ENCODE measurements at regions of chr19 and their contacts with region 1.

Region 1: DNA sequence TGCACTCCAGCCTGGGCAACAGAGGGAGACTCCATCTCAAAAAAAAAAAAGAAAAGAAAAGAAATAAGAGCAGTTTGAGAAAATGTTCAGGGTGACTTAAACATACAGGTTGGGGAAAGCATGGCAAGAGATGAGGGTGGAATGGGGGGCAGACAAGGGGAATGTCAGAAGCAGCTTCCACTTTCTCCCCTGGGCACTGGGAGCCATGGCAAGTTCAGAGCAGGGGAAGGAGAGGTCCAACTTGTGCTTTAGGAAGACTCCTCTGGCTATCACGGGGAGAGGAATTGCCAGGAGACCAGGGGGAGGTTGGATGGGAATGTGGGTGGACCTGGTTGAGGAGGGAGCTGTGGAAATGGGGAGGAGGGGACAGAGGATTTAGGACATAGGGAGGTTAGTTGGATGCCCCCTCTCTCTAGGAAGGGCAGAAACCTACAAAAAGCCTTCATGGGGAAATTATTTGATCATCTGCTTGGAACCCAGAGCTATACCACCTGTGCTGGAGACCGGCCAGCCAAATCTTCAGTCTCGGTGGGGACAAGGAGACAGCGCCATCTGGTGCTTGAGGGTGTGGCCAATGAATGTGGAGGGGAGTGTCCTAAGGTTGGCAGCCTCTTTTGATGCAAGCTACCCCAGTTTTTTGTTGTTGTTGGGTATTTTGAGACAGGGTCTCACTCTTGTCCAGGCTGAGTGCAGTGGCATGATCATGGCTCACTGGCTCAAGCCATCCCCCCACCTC is 7.3 kb upstream of the STRN4 start:
- DNase-seq: peak; percentile 41
- H3K4me3 ChIP-seq: no peak overlapping the region
- H3K27ac ChIP-seq: no peak overlapping the region
- H3K4me1 ChIP-seq: peaks cover 27% of the 10 kb centered on the region
- H3K27me3 ChIP-seq: no peaks in the 10 kb centered on the region
- CTCF ChIP-seq: peak; percentile 47 to 53
- POLR2A ChIP-seq: no peak

Region 2: DNA sequence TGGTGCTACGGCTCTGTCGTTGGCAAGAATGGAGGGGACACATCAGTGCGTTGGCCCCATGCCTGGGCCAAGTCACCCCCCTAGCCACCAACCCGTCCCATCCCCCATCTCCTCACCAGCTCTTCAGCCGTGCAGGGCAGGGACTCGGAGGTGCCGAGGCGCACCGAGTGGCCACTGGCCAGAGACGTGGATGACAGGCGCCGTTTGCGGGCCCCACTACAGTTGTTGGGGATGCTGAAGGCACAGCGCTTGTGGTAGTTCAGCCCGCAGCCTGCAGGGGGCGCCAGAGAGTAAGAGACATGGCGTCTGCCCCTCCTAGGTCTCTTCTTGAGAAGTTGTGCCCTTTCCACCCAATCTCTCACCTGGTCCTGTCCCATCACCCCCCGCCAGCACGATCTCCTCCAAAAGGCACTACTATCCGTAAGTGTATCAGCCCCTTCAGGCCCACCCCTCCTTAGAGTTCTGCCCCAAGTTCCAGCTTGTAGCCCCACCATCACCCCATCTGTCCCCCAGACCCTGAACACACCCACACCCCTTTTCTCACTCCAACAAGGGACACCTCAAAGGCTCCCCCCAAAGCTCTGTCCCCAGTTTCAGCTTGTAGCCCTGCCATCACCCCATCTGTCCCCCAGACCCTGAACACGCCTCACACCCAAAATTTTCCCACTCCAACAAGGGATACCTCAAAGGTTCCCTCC is 49.1 kb before region 1 on chr19:
- CTCF ChIA-PET with region 1: interaction called, 7 read pairs
- POLR2A ChIA-PET with region 1: no interaction called
- dilution Hi-C with region 1: no loop called
- intact Hi-C with region 1: loop called (anchors 1 kb)
- DNase-seq: peak; percentile 64
- H3K4me3 ChIP-seq: no peak overlapping the region
- H3K27ac ChIP-seq: no peak overlapping the region
- H3K4me1 ChIP-seq: no peaks in the 10 kb centered on the region
- H3K27me3 ChIP-seq: no peaks in the 10 kb centered on the region
- CTCF ChIP-seq: peak; percentile 95 to 98
- POLR2A ChIP-seq: peak; percentile 26

Region 3: DNA sequence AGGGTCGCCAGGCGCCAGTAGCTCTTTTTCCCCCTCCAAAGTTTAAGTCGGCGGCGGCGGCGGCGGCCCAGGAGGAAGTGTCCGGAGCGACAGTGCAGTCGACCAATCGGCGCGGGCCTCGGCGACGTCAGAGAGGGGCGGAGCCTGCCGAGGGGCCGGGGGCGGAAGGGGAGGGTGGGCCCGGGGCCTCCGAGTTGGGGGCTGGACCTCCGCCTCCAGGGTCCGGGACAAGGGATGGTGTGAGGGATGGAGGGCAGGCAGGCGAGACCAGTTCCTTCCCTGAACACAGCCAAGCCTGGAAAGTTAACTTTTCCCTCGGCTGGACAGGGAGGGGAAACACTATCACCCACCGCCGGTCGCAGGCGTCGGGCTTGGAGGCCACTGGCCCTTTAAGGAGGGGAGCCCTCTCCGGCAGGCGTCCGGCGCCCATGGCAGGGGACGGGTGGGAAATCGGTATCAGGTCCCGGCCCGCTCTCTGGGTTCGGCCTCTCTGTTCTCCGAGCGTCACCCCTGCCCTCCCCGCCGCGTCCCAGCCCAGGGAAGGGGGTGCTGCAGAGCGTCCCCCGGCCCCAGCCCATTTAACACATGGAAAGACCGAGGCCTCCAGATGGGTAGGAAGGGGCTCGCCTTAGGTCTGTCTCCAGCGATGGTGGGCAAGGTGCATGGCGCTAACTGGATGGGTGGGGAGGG is 36.4 kb before region 1 on chr19 and contains the start of gene PRKD2:
- CTCF ChIA-PET with region 1: interaction called, 6 read pairs
- POLR2A ChIA-PET with region 1: interaction called, 11 read pairs
- dilution Hi-C with region 1: no loop called
- intact Hi-C with region 1: no loop called
- DNase-seq: peak; percentile 84
- H3K4me3 ChIP-seq: peak within 1 kb of the TSS; percentile 76 to 96 (median 85)
- H3K27ac ChIP-seq: peak within 1 kb of the TSS; percentile 57
- H3K4me1 ChIP-seq: peaks cover 38% of the 10 kb centered on the region
- H3K27me3 ChIP-seq: no peaks in the 10 kb centered on the region
- CTCF ChIP-seq: no peak
- POLR2A ChIP-seq: peak; percentile 68
- total RNA-seq, gene PRKD2: 94.9 and 101 TPM in 2 replicates

Region 4: GRCh38 chr19:46766569-46767317 is 13.2 kb after region 1 on chr19:
- CTCF ChIA-PET with region 1: interaction called, 34 read pairs
- POLR2A ChIA-PET with region 1: no interaction called
- dilution Hi-C with region 1: no loop called
- intact Hi-C with region 1: no loop called
- DNase-seq: peak; percentile 27
- H3K4me3 ChIP-seq: no peak overlapping the region
- H3K27ac ChIP-seq: no peak overlapping the region
- H3K4me1 ChIP-seq: no peaks in the 10 kb centered on the region
- H3K27me3 ChIP-seq: no peaks in the 10 kb centered on the region
- CTCF ChIP-seq: peak; percentile 85
- POLR2A ChIP-seq: no peak

Measured in endothelial cell of umbilical vein (primary cell).